Activated CD4-positive, alpha-beta memory T cell treated with anti-CD3 and anti-CD28 coated beads, Interleukin-2, amount 10 ng/mL, durations not matched to agents 7 days and 5 days (primary cell): ENCODE measurements at regions of chr2 and their contacts with region 1.

Region 1: DNA sequence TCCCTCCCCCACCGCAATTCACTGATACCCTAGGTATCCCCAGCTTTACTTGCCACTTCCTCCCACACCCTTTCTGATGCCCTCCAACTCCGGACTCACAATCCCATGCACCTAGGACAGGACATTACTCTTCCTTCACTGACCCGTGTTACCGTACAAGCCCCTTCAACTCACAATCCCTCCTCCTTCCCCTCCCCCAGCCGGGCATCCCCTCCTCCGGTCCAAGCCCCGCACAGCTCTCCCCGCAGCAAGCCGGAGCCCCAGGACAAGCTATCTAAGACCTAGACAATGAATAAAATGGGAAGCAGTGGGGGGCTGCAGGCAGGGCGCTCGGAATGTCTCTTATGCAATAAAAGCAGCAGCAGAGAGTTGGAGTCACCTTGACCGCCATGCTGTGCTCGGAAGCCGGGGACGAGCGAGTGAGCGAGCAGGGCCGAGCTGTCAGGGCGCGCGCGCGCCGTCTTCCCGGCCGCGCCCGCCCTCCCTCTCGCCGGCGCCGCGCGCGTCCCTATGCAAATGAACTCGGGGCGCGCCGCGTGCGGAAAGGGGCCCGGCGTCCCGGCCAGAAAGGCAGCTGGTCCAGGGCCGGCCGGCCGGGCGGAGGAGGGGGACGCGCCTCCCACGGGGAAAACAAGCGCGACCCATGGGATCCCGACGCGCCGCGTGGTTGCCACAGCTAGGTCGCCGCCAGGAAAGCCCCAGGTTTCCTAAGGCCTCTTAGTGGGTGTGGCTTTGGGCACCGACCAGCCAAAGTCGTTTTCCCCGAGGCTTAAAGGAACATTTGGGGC is at the start of gene SLC25A12:
- DNase-seq: peak; percentile 80
- H3K4me3 Mint-ChIP-seq: peak within 1 kb of the TSS; percentile 98
- H3K27ac Mint-ChIP-seq: peak within 1 kb of the TSS; percentile 80
- H3K4me1 Mint-ChIP-seq: peaks cover 42% of the 10 kb centered on the region
- H3K27me3 Mint-ChIP-seq: peaks cover 1% of the 10 kb centered on the region
- total RNA-seq, gene SLC25A12: 24.1 to 28.1 TPM

Region 2: GRCh38 chr2:171882089-171882769 is 11.8 kb before region 1 on chr2:
- CTCF ChIA-PET with region 1: interaction called, 4 read pairs
- POLR2A ChIA-PET with region 1: interaction called, 16 read pairs
- DNase-seq: no peak
- H3K4me3 Mint-ChIP-seq: no peak overlapping the region
- H3K27ac Mint-ChIP-seq: no peak overlapping the region
- H3K4me1 Mint-ChIP-seq: peaks cover 32% of the 10 kb centered on the region
- H3K27me3 Mint-ChIP-seq: no peaks in the 10 kb centered on the region

Region 3: GRCh38 chr2:171922230-171923022 is 28.4 kb after region 1 on chr2 and contains the start of gene HAT1:
- CTCF ChIA-PET with region 1: interaction called, 10 read pairs
- POLR2A ChIA-PET with region 1: interaction called, 53 read pairs
- DNase-seq: peak; percentile 98
- H3K4me3 Mint-ChIP-seq: peak within 1 kb of the TSS; percentile 98
- H3K27ac Mint-ChIP-seq: peak within 1 kb of the TSS; percentile 95
- H3K4me1 Mint-ChIP-seq: peaks cover 39% of the 10 kb centered on the region
- H3K27me3 Mint-ChIP-seq: no peaks in the 10 kb centered on the region
- total RNA-seq, gene HAT1: 59.4 to 59.5 TPM